ENCODE measurements at regions of chr10 and their contacts with region 1.

Region 1: GRCh38 chr10:69392481-69393000 is 24.2 kb downstream of the TACR2 start:
- DNase-seq: peak; percentile 88

Region 2: DNA sequence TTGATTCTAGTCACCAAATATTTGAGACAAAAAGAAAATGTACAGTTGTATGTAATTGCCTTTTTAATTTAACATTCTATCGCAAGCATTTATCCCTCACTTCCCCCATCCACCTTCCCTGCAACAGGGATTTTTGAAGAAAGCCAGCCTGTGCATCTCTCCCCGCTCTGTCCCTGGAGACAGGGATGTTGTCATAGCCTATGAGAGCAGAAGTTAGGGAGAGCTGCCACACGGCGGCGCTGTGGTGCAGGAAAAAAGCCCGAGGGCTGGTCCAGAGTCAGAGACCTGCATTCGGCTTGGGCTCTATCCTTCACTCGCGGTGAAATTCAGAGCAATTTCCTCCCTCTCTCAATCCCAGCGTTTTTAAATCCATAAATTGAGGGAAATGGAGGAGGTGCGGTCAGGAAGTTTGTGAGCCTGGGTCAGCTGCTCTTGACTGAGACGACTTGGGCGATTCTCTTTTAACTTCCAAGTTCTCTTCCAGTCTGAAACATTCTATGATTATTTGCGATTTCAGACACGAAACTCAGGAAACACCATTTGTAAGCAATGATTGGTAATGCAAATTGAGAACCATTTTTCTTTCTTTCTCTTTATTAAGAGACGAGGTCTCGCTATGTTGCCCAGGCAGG is 154.9 kb before region 1 on chr10:
- CTCF ChIA-PET with region 1: interaction called, 15 read pairs
- POLR2A ChIA-PET with region 1: no interaction called
- DNase-seq: peak; percentile 88

Region 3: GRCh38 chr10:69408318-69409175 is 16.0 kb after region 1 on chr10:
- CTCF ChIA-PET with region 1: interaction called, 12 read pairs
- POLR2A ChIA-PET with region 1: no interaction called
- DNase-seq: peak; percentile 94

Region 4: DNA sequence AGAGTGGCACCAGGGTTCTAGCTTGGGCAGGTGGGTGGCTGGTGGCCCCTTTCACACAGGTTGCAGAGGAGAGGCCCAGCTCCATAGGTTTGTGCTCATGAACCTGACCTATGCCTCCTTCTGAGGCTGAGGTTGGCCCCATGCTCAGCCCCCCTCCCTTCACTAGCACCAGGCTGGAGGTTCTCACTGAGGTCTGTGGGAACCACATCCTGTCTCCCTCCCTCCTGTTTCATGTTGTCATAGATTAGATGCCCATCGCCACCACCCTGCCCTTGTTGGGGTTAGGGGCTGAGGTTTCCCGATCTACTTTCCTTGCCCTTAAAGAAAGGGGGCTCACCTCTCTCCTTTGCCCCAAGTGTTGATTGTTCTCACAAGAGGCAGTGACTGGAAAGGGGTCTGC is 166.0 kb after region 1 on chr10:
- CTCF ChIA-PET with region 1: no interaction called
- POLR2A ChIA-PET with region 1: no interaction called
- DNase-seq: no peak

Measured in HEK293T (cell line).